ENCODE measurements at regions of chr5 and their contacts with region 1.

Region 1: DNA sequence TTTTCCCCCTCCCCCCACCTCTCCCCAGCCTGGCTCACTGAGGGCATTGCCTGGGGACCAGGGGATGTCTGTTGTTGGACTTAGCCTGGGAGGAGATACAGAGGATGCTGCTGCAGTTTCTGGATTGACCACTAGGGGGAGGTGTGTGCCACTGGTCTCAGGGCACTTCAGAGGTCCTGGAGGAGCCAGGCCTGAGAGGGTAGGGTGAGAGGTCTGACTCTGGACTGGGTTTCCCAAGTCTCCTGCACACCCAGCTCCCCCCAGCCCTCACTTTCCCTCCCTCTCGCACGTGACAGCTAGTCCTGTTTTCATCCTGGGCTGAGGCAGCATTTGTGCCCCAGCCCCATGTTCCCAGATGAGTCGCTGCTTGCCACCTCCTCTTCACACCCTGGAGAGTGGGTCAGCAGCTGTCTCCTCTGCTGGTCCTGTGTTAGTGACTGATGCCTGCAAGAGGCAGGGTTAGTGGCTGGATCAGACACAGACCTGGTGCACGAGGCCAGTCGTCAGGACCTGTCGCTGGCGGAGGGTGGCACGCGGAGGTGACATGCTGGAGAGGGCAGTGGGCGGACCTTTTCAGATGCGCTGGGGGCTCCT is 4.4 kb downstream of the IL3 start:
- DNase-seq: peak; percentile 57 to 86 (median 72)
- ATAC-seq: peak; percentile 75
- H3K4me3 ChIP-seq: no peak overlapping the region
- H3K4me3 Mint-ChIP-seq: no peak overlapping the region
- H3K27ac ChIP-seq: no peak overlapping the region
- H3K27ac Mint-ChIP-seq: no peak overlapping the region
- H3K4me1 ChIP-seq: peaks cover 29% of the 10 kb centered on the region
- H3K4me1 Mint-ChIP-seq: peaks cover 15% of the 10 kb centered on the region
- H3K27me3 ChIP-seq: no peaks in the 10 kb centered on the region
- H3K27me3 Mint-ChIP-seq: no peaks in the 10 kb centered on the region
- CTCF ChIP-seq: peak; percentile 82

Region 2: DNA sequence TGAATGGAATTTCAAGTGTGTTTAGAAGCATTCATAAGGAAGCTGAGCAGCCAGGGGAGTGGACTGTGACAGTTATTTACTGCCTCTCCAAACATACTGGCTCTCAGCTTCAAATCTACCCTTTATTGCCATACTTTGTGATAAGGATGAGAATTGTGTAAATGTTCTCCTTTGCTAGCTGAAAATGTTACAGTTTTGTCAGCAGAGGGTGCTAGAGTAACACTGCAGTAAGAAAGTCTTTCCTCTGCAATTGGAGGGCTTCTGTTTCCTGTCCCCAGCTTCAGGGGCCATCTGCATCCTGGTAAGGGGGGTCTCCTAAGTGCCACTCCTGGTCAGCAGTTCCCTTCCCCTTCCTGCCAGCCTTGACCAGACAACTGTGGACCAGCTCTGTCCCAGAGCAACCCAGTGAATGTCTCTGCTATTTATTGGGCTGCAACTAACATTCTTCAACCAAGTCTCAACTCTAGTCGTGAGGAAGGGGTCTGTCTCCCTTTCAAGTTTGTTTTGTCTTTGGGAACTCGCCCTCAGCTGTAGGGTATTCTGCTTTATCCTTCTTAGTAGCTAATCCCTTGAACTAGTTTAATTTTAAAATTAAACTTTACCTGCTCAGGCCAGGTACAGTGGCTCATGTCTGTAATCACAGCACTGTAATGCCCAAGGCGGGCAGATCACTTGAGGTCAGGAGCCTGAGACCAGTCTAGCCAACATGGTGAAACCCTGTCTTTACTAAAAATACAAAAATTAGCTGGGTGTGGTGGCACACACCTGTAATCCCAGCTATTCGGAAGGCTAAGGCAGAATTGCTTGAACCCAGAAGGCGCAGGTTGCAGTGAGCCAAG is 475.1 kb before region 1 on chr5:
- CTCF ChIA-PET with region 1: interaction called, 18 read pairs
- POLR2A ChIA-PET with region 1: interaction called, 5 read pairs
- intact Hi-C with region 1: loop called (anchors 1 kb)
- DNase-seq: peak in 8 of 14 experiments; percentile 11 to 76 (median 33)
- ATAC-seq: peak; percentile 71
- H3K4me3 ChIP-seq: no peak overlapping the region
- H3K4me3 Mint-ChIP-seq: no peak overlapping the region
- H3K27ac ChIP-seq: no peak overlapping the region
- H3K27ac Mint-ChIP-seq: peak overlapping the region; percentile 38
- H3K4me1 ChIP-seq: peaks cover 16% of the 10 kb centered on the region
- H3K4me1 Mint-ChIP-seq: peaks cover 64% of the 10 kb centered on the region
- H3K27me3 ChIP-seq: no peaks in the 10 kb centered on the region
- H3K27me3 Mint-ChIP-seq: no peaks in the 10 kb centered on the region
- CTCF ChIP-seq: peak; percentile 98

Region 3: GRCh38 chr5:132103332-132103951 is 38.6 kb after region 1 on chr5:
- CTCF ChIA-PET with region 1: interaction called, 5 read pairs
- POLR2A ChIA-PET with region 1: interaction called, 3 read pairs
- intact Hi-C with region 1: loop called in 1 of 2 experiments (anchors 2 kb)
- DNase-seq: peak; percentile 42 to 94 (median 59)
- ATAC-seq: peak; percentile 82
- H3K4me3 ChIP-seq: no peak overlapping the region
- H3K4me3 Mint-ChIP-seq: peak overlapping the region; percentile 72
- H3K27ac ChIP-seq: peak overlapping the region; percentile 66 to 90
- H3K27ac Mint-ChIP-seq: peak overlapping the region; percentile 81
- H3K4me1 ChIP-seq: peaks cover 73% of the 10 kb centered on the region
- H3K4me1 Mint-ChIP-seq: peaks cover 72% of the 10 kb centered on the region
- H3K27me3 ChIP-seq: no peaks in the 10 kb centered on the region
- H3K27me3 Mint-ChIP-seq: no peaks in the 10 kb centered on the region
- CTCF ChIP-seq: peak; percentile 22

Region 4: DNA sequence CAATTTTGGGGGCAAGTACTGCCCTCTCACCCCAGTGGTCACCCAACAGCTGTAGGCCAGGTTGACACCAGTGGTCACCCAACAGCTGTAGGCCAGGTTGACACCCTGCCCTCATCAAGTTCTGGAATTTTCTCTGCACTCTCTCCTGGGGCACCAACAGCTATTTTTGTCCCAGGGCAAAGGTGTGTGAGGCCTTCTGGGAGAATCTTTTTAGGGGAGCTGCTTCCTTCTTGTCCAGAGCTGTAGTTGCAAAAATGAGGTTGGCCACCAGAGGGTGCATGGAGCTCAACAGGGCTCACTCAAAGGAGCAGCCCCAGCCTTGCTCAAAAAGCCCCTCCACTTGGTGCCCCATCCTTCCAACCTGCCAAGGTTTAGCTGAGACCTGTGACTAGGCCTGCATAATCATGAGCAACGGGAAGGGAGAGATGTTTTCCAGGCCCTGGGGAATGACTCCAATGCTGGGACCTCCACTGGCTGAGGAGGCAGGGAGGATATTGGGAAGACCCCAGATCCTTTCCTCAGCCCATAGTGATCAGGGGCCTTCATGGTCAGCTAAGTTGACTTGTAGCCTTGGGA is 173.4 kb after region 1 on chr5:
- CTCF ChIA-PET with region 1: no interaction called
- POLR2A ChIA-PET with region 1: no interaction called
- intact Hi-C with region 1: loop called in 1 of 2 experiments (anchors 1 kb)
- DNase-seq: peak; percentile 36 to 76 (median 60)
- ATAC-seq: peak; percentile 67
- H3K4me3 ChIP-seq: no peak overlapping the region
- H3K4me3 Mint-ChIP-seq: no peak overlapping the region
- H3K27ac ChIP-seq: no peak overlapping the region
- H3K27ac Mint-ChIP-seq: no peak overlapping the region
- H3K4me1 ChIP-seq: no peaks in the 10 kb centered on the region
- H3K4me1 Mint-ChIP-seq: no peaks in the 10 kb centered on the region
- H3K27me3 ChIP-seq: peaks cover 0 to 2% of the 10 kb centered on the region in 2 experiments
- H3K27me3 Mint-ChIP-seq: peaks cover 4% of the 10 kb centered on the region
- CTCF ChIP-seq: peak; percentile 80

Region 5: GRCh38 chr5:132500931-132501630 is 436.2 kb after region 1 on chr5:
- CTCF ChIA-PET with region 1: no interaction called
- POLR2A ChIA-PET with region 1: no interaction called
- intact Hi-C with region 1: loop called in 1 of 2 experiments (anchors 10 kb)
- DNase-seq: peak; percentile 63 to 90 (median 73)
- ATAC-seq: peak; percentile 26
- H3K4me3 ChIP-seq: no peak overlapping the region
- H3K4me3 Mint-ChIP-seq: no peak overlapping the region
- H3K27ac ChIP-seq: peak overlapping the region in 1 of 2 donors; percentile 37
- H3K27ac Mint-ChIP-seq: peak overlapping the region; percentile 65
- H3K4me1 ChIP-seq: peaks cover 49% of the 10 kb centered on the region
- H3K4me1 Mint-ChIP-seq: peaks cover 29% of the 10 kb centered on the region
- H3K27me3 ChIP-seq: no peaks in the 10 kb centered on the region
- H3K27me3 Mint-ChIP-seq: peaks cover 3% of the 10 kb centered on the region
- CTCF ChIP-seq: peak; percentile 88

Measured in CD4-positive, alpha-beta T cell (primary cell).